ENCODE measurements at regions of chr19 and their contacts with region 1.

Region 1: DNA sequence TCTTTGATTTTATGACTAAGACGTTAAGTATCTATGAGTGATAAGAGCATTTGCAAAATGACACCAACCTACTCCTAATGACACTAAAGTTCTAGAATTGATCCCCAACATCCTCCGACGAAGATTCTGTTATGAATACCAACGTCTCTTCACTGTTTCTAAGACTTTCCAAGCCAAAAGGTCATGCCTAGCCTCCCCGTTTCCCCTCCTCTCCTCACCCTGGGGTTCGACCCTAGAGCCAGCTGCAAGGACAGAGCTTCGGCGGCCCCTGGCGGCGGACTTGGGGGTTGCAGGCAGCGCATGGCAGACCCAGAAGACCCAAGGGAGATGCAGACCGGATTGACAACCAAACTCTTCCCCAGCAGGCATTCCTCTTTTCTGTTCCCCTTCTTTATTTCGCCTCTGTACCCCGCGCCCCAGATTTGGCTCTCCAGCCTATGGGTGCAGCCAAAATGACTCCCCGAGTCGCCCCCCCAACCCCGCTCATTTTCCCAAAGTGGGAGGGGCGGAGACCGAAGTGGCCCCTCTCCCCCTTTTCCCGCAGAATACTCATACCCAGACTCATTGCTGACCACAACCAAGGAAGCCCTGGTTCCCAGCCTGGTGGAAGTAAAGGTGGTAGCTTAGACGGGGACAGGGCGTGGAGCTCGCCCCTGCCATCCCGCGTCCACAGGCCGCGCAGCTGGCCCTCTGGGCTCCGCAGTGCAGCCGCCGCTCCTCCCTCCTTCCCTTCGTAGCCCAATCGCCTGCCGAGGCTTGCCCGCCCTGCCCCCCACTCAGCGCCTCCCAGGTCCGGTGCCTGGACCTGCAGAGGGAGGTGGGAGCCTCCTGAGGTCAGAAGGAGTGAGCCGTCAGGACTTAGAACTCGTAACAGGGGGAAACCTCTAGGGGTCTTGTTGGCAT is 4.1 kb upstream of the EML2 start:
- DNase-seq: peak; percentile 93
- ATAC-seq: peak; percentile 7
- H3K4me3 Mint-ChIP-seq: peak overlapping the region; percentile 73
- H3K27ac Mint-ChIP-seq: peak overlapping the region; percentile 99
- H3K4me1 Mint-ChIP-seq: peaks cover 46% of the 10 kb centered on the region
- H3K27me3 Mint-ChIP-seq: no peaks in the 10 kb centered on the region

Region 2: DNA sequence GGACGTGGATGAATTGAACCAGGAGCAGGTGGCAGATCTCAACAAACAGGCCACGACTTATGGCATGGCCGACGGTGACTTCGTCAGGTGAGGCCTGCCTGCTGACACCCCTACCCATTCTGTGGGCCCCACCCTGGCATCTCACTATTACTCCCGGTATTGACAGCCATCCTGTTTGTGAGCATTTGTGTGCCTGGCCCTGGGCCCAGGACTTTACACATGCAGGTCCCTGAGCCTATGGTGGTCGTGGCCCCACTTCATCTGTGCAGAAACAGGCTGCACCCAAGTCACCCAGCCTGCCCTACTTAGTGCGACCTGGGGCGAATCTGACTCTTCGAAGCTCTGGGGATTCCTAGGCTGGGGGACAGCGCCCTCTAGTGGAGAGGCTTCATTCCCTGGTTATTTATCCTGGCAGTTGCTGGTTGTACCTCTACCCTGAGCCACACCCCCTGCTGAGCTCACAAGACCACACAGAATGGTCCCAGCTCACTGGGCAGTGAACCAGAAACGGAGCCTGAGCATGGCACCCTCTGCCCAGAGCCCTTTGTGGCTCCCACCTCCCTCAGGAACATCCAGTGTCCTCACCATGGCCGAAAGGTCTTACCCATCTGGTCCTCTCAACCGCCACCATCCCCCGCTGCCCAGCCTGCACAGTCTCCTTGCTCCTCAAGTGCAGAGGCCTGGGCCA is 583.9 kb before region 1 on chr19:
- CTCF ChIA-PET with region 1: no interaction called
- DNase-seq: peak; percentile 88
- ATAC-seq: peak; percentile 91
- H3K4me3 Mint-ChIP-seq: no peak overlapping the region
- H3K27ac Mint-ChIP-seq: peak overlapping the region; percentile 25
- H3K4me1 Mint-ChIP-seq: no peaks in the 10 kb centered on the region
- H3K27me3 Mint-ChIP-seq: no peaks in the 10 kb centered on the region

Region 3: GRCh38 chr19:45439569-45440254 is 203.6 kb before region 1 on chr19:
- CTCF ChIA-PET with region 1: interaction called, 21 read pairs
- DNase-seq: peak; percentile 93
- ATAC-seq: peak; percentile 79
- H3K4me3 Mint-ChIP-seq: peak overlapping the region; percentile 64
- H3K27ac Mint-ChIP-seq: peak overlapping the region; percentile 83
- H3K4me1 Mint-ChIP-seq: peaks cover 30% of the 10 kb centered on the region
- H3K27me3 Mint-ChIP-seq: no peaks in the 10 kb centered on the region

Region 4: DNA sequence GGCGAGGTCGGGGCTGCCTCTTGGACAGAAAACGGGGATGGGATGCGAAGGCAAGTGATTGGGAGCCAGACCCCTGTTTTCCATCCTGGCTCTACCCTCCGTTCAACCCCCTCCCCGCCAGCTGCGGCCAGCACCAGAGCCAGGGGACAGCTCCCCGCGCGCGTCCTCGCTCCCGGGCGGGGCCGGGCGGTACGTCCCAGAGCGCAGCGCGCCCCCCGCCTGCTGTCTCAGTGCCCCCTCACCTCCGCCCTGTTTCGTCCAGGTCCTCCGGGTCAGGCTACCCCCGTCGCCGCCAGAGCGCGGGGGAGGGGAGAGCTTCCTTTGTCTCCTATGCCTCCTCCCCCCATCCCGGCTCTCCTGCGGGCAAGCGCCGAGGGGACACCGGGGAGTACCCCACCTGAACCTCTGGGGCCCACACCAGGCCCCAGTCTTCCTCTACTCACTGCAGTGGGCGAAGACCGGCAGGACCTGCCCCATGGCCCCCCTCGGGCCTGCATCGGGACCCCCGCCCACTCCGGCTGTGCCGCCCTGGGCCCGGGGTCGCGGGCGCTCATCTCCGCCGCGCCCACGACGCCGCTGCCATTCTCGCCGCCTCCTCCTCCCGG is 146.8 kb before region 1 on chr19:
- CTCF ChIA-PET with region 1: interaction called, 18 read pairs
- DNase-seq: peak; percentile 72
- ATAC-seq: peak; percentile 25
- H3K4me3 Mint-ChIP-seq: peak overlapping the region; percentile 29
- H3K27ac Mint-ChIP-seq: no peak overlapping the region
- H3K4me1 Mint-ChIP-seq: peaks cover 40% of the 10 kb centered on the region
- H3K27me3 Mint-ChIP-seq: peaks cover 25% of the 10 kb centered on the region

Region 5: DNA sequence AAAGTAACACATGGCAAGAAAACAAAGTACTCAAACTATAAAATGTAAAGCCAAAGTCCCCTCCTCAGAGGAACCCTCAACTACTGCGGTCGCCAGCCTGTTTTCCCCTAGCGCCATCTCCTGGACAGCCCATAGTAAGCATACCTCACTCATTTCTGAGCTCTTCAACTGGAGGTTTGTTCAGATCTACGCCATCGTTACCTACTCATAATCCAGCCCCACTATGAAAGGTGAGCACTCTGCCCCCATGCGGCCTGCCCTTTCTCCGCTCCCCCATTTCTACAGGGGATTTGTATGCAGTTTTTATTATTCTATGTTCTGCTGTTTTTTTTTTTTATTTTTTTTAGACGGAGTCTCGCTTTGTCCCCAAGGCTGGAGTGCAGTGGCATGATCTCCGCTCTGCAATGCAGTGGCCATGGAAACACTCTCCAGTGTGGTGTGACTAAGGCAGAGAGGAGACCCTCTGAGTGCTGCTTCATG is 84.8 kb before region 1 on chr19:
- CTCF ChIA-PET with region 1: interaction called, 22 read pairs
- DNase-seq: peak; percentile 81
- ATAC-seq: peak; percentile 97
- H3K4me3 Mint-ChIP-seq: no peak overlapping the region
- H3K27ac Mint-ChIP-seq: no peak overlapping the region
- H3K4me1 Mint-ChIP-seq: peaks cover 15% of the 10 kb centered on the region
- H3K27me3 Mint-ChIP-seq: no peaks in the 10 kb centered on the region

Region 6: GRCh38 chr19:45598267-45599001 is 44.8 kb before region 1 on chr19:
- CTCF ChIA-PET with region 1: interaction called, 50 read pairs
- DNase-seq: no peak
- ATAC-seq: no peak
- H3K4me3 Mint-ChIP-seq: peak overlapping the region; percentile 48
- H3K27ac Mint-ChIP-seq: no peak overlapping the region
- H3K4me1 Mint-ChIP-seq: peaks cover 29% of the 10 kb centered on the region
- H3K27me3 Mint-ChIP-seq: peaks cover 80% of the 10 kb centered on the region

Region 7: DNA sequence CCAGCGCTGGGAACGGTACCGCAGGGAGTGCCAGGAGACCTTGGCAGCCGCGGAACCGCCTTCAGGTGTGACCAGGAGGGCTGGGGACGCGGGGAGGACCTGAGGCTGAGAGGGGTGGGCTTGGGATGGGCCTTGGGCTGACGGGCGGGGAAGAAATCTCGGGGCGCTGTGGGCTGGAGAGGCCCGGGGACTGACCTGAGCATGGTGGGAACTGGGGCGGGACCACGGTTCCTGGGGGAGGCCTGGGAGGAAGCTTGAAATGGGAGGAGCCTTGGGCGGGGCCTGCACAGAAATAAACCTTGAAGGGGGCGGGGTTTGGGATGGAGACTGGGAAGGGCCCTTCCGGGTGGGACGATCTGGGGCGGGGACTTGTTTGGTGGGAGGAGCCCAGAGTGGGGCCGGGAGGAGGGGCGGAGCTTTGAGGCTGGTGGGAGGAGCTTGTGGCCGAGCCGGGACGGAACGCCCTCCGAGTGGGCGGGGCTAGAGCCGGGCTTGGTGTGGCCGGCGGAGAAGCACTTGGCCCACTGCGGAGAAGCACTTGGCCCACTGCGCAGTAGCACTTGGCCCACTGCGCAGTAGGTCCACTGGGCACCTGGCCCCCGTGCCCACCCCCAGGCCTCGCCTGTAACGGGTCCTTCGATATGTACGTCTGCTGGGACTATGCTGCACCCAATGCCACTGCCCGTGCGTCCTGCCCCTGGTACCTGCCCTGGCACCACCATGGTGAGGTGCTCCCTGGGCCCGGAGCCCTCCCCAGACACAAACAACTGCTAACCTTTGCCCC is 27.6 kb after region 1 on chr19:
- CTCF ChIA-PET with region 1: interaction called, 19 read pairs
- DNase-seq: peak; percentile 88
- ATAC-seq: peak; percentile 53
- H3K4me3 Mint-ChIP-seq: peak overlapping the region; percentile 56
- H3K27ac Mint-ChIP-seq: no peak overlapping the region
- H3K4me1 Mint-ChIP-seq: peaks cover 30% of the 10 kb centered on the region
- H3K27me3 Mint-ChIP-seq: peaks cover 10% of the 10 kb centered on the region

Region 8: DNA sequence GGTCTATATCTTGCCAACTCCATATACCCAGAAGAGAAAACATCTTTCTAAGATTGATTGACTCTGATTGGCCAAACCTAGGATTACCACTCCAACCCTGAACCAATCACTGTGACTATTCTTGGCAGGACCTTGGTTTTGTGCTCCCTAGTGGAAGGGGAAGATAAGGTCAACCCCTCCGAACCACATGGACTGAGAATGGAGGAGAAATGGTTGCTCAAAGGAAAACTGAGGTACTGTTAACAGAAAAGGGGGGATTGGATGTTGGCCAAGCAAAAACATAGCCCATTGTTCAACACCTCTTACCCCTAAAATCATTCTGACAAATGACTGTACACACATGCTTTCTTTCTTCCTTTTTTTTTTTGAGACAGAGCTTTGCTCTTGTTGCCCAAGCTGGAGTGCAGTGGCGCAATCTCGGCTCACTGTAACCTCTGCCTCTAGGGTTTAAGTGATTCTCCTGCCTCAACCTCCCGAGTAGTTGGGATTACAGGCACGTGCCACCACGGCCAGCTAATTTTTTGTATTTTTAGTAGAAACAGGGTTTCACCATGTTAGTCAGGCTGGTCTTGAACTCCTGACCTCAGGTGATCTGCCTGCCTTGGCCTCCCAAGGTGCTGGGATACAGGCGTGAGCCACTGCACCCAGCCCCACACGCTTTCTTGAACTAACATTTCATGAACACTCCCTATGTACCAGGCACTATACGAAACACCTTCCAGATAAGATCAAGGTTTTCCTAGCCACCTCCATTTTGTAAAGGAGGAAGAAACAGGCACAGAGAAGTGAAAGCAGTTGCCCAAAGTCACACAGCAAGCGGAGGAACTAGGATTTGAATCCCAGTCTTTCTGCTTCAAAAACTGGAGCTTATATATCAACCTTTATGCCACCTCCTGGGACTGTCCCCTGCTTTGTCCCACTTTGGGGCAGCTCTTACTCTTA is 96.5 kb after region 1 on chr19:
- CTCF ChIA-PET with region 1: no interaction called
- DNase-seq: no peak
- ATAC-seq: no peak
- H3K4me3 Mint-ChIP-seq: no peak overlapping the region
- H3K27ac Mint-ChIP-seq: no peak overlapping the region
- H3K4me1 Mint-ChIP-seq: no peaks in the 10 kb centered on the region
- H3K27me3 Mint-ChIP-seq: peaks cover 17% of the 10 kb centered on the region